Activated naive CD8-positive, alpha-beta T cell treated with anti-CD3 and anti-CD28 coated beads, Interleukin-2, amount 10 ng/mL, durations not matched to agents 7 days and 5 days (primary cell): ENCODE measurements at regions of chr4 and their contacts with region 1.

Region 1: GRCh38 chr4:108118490-108118889 is 50.2 kb downstream of the LEF1 start:
- DNase-seq: no peak
- ATAC-seq: peak; percentile 18
- H3K4me3 Mint-ChIP-seq: peak overlapping the region; percentile 78
- H3K27ac Mint-ChIP-seq: peak overlapping the region; percentile 85
- H3K4me1 Mint-ChIP-seq: peaks cover 81% of the 10 kb centered on the region
- H3K27me3 Mint-ChIP-seq: no peaks in the 10 kb centered on the region

Region 2: GRCh38 chr4:107951551-107951950 is 166.9 kb before region 1 on chr4:
- POLR2A ChIA-PET with region 1: no interaction called
- DNase-seq: no peak
- ATAC-seq: no peak
- H3K4me3 Mint-ChIP-seq: no peak overlapping the region
- H3K27ac Mint-ChIP-seq: no peak overlapping the region
- H3K4me1 Mint-ChIP-seq: no peaks in the 10 kb centered on the region
- H3K27me3 Mint-ChIP-seq: no peaks in the 10 kb centered on the region

Region 3: GRCh38 chr4:107970063-107970798 is 148.3 kb before region 1 on chr4:
- POLR2A ChIA-PET with region 1: no interaction called
- DNase-seq: no peak
- ATAC-seq: no peak
- H3K4me3 Mint-ChIP-seq: no peak overlapping the region
- H3K27ac Mint-ChIP-seq: no peak overlapping the region
- H3K4me1 Mint-ChIP-seq: peaks cover 5% of the 10 kb centered on the region
- H3K27me3 Mint-ChIP-seq: peaks cover 4% of the 10 kb centered on the region

Region 4: GRCh38 chr4:108030332-108030731 is 88.2 kb before region 1 on chr4:
- POLR2A ChIA-PET with region 1: interaction called, 12 read pairs
- DNase-seq: peak; percentile 63
- ATAC-seq: peak; percentile 79
- H3K4me3 Mint-ChIP-seq: peak overlapping the region; percentile 87
- H3K27ac Mint-ChIP-seq: peak overlapping the region; percentile 91
- H3K4me1 Mint-ChIP-seq: peaks cover 56% of the 10 kb centered on the region
- H3K27me3 Mint-ChIP-seq: no peaks in the 10 kb centered on the region

Region 5: GRCh38 chr4:108139089-108139488 is 20.6 kb after region 1 on chr4:
- POLR2A ChIA-PET with region 1: interaction called, 18 read pairs
- DNase-seq: no peak
- ATAC-seq: no peak
- H3K4me3 Mint-ChIP-seq: peak overlapping the region; percentile 71
- H3K27ac Mint-ChIP-seq: peak overlapping the region; percentile 84
- H3K4me1 Mint-ChIP-seq: peaks cover 76% of the 10 kb centered on the region
- H3K27me3 Mint-ChIP-seq: no peaks in the 10 kb centered on the region

Region 6: GRCh38 chr4:108144451-108144850 is 26.0 kb after region 1 on chr4:
- POLR2A ChIA-PET with region 1: interaction called, 18 read pairs
- DNase-seq: peak; percentile 58
- ATAC-seq: peak; percentile 51
- H3K4me3 Mint-ChIP-seq: peak overlapping the region; percentile 76
- H3K27ac Mint-ChIP-seq: peak overlapping the region; percentile 78
- H3K4me1 Mint-ChIP-seq: peaks cover 77% of the 10 kb centered on the region
- H3K27me3 Mint-ChIP-seq: no peaks in the 10 kb centered on the region

Region 7: GRCh38 chr4:108155373-108155772 is 36.9 kb after region 1 on chr4:
- POLR2A ChIA-PET with region 1: interaction called, 39 read pairs
- DNase-seq: no peak
- ATAC-seq: peak; percentile 28
- H3K4me3 Mint-ChIP-seq: peak overlapping the region; percentile 80
- H3K27ac Mint-ChIP-seq: peak overlapping the region; percentile 70
- H3K4me1 Mint-ChIP-seq: peaks cover 76% of the 10 kb centered on the region
- H3K27me3 Mint-ChIP-seq: no peaks in the 10 kb centered on the region